ENCODE measurements at regions of chr6 and their contacts with region 1.

Region 1: DNA sequence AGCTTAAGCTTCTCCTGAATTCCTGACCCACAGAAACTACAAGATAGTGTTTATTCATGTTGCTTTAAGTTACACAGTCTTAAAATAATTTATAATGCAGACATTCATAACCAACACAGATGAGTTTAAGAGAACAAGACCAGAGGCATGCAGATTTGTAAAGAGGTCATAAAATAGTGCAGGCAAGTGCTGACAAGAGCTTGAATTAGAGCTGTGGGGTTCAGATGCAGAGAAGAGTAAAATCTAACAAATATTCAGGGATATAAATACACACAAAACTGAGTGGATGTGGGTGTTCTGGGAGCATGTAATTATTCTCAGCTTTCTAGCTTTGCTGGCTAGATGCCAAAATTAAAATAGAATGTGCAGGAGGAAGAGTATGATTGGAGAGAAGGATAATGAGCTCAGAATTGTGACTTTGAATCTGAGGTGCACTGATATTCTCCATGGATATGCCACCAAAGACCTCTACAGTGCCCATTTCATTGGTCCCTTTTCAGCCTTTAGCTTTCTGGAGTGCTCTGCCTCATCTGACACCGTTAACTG is 291.9 kb upstream of the SGK1 start:
- DNase-seq: no peak
- CTCF ChIP-seq: no peak

Region 2: DNA sequence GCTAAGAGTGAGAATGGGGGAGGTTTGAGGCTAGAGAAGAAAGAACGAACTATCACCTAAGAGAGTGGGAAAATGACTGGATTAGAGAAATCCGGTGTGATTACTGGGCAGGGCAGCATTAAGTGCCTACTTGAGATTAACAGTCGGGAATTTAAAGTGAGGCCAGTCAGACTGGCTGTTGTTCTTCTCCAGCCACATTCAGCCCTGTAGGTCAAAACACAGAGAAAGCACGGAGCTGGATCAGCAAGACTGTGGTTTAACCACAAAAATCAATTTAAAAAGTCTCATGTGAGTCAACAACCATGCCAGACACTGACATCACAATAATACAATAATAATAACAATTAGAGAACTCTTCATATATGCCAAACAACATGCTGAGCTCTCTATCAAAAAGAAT is 10.0 kb after region 1 on chr6:
- CTCF ChIA-PET with region 1: interaction called, 10 read pairs
- POLR2A ChIA-PET with region 1: no interaction called
- DNase-seq: no peak
- CTCF ChIP-seq: no peak

Measured in GM10248 (cell line).